PC-9 (cell line): ENCODE measurements at regions of chr2 and their contacts with region 1.

Region 1: GRCh38 chr2:120312861-120313694 is 32.9 kb upstream of the INHBB start:
- DNase-seq: peak; percentile 77 to 90
- H3K4me3 ChIP-seq: no peak overlapping the region
- H3K27ac ChIP-seq: no peak overlapping the region
- H3K4me1 ChIP-seq: no peaks in the 10 kb centered on the region
- H3K27me3 ChIP-seq: no peaks in the 10 kb centered on the region
- CTCF ChIP-seq: peak; percentile 98

Region 2: DNA sequence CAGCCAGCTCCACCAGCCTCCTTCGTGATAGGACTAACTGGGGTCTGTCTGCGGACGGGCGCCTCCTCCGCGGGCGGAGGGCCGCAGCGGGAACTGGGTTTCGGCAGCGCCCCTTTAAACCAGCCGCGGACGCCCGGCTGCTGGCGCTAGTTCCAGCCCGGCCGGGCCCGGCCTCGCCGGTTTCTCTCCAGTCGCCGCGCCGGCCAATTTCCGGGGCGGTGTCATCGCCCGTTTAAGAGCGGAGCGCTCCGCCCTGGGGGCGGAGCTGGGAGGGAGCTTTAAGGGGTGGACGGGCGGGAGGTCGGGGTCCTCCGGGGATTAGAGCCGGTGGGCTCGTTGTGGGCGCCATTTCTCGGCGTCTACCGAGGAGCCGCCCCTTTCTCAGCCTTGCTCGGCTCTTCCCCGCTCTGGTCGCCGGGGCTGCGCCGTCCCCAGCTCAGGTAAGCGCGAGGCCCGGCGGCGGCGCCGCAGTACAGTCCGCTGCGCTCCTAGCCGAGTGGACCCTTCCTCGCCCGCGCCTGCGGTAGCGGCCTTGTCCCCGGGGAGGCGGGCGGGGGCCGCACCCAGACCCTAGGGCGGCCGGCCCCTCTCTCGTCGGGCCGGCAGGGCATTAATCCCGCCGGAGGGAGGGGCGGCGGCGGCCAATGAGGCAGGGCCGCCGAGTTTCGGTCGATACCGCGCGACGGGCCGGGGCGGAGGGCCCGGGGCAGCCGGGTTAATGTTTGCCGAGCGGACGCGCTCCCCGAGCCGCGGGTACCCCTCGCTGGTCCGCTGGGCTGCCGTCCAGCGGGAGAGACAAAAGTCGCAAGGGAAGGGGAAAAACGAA is 300.1 kb before region 1 on chr2 and contains the start of gene EPB41L5:
- CTCF ChIA-PET with region 1: no interaction called
- POLR2A ChIA-PET with region 1: no interaction called
- intact Hi-C with region 1: loop called (anchors 10 kb)
- DNase-seq: peak; percentile 88 to 95
- H3K4me3 ChIP-seq: peak within 1 kb of the TSS; percentile 82
- H3K27ac ChIP-seq: peak within 1 kb of the TSS; percentile 88
- H3K4me1 ChIP-seq: peaks cover 24% of the 10 kb centered on the region
- H3K27me3 ChIP-seq: no peaks in the 10 kb centered on the region
- CTCF ChIP-seq: no peak
- total RNA-seq, gene EPB41L5: 18.4 and 21.6 TPM in 2 replicates

Region 3: DNA sequence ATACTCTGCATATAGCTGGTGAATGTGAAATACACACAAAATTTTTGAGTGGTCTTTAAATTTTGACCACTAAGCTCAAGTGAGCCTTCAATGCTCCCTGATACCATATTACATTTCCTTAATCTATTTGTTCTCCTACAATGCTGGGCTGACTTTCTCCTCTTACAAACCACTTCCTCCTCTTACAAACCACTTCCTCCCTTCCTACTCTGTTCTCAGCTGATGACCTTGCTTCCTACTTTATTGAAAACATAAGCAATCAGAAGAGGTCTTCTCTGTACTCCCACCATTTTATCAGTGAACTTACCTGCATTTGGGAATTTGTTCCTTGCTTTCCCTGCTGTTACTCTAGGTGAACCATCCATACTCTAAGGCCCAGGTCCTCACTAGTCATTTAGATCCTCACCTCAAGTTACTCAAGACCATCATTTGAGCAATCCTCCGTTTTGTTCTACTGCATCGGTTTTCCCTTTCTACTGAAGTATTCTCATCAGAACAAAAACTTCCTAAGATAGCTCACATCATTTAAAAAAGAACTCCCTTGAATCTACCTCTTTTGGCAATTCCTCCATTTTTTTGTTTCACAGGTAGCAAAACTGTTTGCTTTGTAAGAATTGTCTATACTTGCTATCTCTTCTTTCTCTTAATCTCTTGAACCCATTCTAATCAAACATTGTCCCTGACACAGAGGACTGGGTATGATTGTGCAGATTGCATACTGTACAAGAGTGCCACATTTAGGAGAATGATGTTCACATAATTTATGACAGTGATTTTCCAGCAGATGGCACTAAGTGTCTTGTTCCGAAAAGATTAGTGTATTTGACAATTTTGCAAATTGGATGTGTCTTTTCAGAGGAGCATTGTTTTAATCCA is 203.7 kb before region 1 on chr2:
- CTCF ChIA-PET with region 1: interaction called, 8 read pairs
- POLR2A ChIA-PET with region 1: no interaction called
- intact Hi-C with region 1: loop called (anchors 1 kb)
- DNase-seq: peak in 1 of 2 experiments; percentile 54
- H3K4me3 ChIP-seq: no peak overlapping the region
- H3K27ac ChIP-seq: no peak overlapping the region
- H3K4me1 ChIP-seq: peaks cover 32% of the 10 kb centered on the region
- H3K27me3 ChIP-seq: no peaks in the 10 kb centered on the region
- CTCF ChIP-seq: peak; percentile 73

Region 4: GRCh38 chr2:120231974-120232635 is 81.0 kb before region 1 on chr2:
- CTCF ChIA-PET with region 1: no interaction called
- POLR2A ChIA-PET with region 1: no interaction called
- intact Hi-C with region 1: loop called (anchors 1 kb)
- DNase-seq: peak in 1 of 2 experiments; percentile 29
- H3K4me3 ChIP-seq: no peak overlapping the region
- H3K27ac ChIP-seq: no peak overlapping the region
- H3K4me1 ChIP-seq: peaks cover 35% of the 10 kb centered on the region
- H3K27me3 ChIP-seq: no peaks in the 10 kb centered on the region
- CTCF ChIP-seq: no peak

Region 5: DNA sequence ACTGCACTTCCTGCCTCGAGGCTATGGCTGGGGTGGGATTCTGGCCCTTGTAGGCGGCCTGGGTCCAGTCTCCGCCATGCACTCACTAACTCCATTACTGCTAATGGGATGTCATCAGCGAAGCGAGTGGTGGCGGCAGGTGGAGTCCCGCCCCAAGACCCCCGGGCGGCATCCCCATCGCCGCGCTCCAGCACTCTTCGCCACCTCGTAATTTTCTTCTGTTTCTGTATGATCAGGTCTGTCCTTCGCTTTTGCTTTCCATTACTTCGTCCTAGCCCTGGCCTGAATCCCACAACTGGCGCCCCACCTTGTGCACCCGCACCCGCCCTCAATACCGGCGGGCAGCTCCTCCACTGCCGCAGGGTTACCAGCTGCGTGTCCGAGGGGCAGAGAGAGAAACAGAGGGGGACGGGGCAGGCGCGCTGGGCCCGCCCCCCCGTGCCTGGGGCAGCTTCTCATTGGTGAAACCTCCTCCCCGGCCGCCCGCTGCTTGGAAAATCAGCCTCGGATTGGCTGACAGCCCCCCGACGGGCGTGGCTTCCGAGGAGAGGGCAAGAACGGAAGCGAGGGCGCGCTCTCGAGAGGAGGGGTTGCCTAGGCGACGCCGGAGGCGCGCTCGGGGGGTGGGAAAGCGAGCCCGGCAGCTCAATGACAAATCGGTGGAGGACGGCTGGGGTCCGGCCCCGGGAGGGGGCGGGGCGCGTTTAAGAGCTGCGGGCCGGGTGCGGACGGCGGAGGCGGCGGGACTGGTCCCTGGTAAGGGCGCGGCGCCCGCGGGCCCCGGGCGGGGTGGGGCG is 60.7 kb before region 1 on chr2 and contains the start of gene RALB:
- CTCF ChIA-PET with region 1: interaction called, 5 read pairs
- POLR2A ChIA-PET with region 1: interaction called, 5 read pairs
- intact Hi-C with region 1: loop called (anchors 2 kb)
- DNase-seq: peak; percentile 98 to 100
- H3K4me3 ChIP-seq: peak within 1 kb of the TSS; percentile 80
- H3K27ac ChIP-seq: peak within 1 kb of the TSS; percentile 53
- H3K4me1 ChIP-seq: peaks cover 42% of the 10 kb centered on the region
- H3K27me3 ChIP-seq: no peaks in the 10 kb centered on the region
- CTCF ChIP-seq: no peak
- total RNA-seq, gene RALB: 74.2 and 86.6 TPM in 2 replicates

Region 6: DNA sequence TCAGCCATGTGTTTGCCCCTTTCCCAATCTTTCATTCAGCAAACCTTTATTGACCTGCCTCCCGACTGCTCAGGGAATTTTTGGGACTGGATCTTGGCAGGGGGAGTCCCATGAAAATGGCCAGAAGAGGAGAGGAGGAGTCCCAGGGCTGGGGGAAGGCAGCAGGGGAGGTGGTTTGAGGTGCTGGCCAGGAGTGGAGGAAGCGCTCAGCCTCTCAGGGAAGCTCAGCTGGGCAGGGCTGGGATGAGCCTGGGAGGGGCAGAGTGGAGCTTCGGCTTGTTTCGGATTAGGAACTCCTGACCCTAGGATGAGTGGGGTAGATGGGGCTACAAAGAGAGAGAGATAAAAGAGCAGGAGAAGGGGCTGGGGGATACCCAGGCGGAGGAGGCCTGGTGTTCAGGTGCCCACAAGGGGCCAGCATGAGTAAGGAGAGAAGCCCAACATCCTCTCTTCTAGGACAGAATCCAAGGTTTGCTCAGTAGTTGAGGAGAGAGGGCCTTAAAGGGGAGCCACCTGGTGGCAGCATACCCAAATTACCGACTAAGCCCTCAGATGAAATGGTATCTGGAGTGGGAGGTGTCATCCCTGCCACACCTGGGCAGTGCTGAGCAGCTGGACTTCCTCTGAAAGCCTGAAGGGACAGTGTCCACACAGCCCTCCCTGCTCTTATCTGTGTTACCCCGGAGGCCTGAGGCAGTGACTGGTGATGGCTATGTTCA is 124.0 kb after region 1 on chr2:
- CTCF ChIA-PET with region 1: interaction called, 3 read pairs
- POLR2A ChIA-PET with region 1: no interaction called
- intact Hi-C with region 1: loop called (anchors 1 kb)
- DNase-seq: peak; percentile 56 to 77
- H3K4me3 ChIP-seq: no peak overlapping the region
- H3K27ac ChIP-seq: no peak overlapping the region
- H3K4me1 ChIP-seq: peaks cover 22% of the 10 kb centered on the region
- H3K27me3 ChIP-seq: no peaks in the 10 kb centered on the region
- CTCF ChIP-seq: peak; percentile 84